ACHN (cell line): ENCODE measurements at regions of chr2 and their contacts with region 1.

Region 1: DNA sequence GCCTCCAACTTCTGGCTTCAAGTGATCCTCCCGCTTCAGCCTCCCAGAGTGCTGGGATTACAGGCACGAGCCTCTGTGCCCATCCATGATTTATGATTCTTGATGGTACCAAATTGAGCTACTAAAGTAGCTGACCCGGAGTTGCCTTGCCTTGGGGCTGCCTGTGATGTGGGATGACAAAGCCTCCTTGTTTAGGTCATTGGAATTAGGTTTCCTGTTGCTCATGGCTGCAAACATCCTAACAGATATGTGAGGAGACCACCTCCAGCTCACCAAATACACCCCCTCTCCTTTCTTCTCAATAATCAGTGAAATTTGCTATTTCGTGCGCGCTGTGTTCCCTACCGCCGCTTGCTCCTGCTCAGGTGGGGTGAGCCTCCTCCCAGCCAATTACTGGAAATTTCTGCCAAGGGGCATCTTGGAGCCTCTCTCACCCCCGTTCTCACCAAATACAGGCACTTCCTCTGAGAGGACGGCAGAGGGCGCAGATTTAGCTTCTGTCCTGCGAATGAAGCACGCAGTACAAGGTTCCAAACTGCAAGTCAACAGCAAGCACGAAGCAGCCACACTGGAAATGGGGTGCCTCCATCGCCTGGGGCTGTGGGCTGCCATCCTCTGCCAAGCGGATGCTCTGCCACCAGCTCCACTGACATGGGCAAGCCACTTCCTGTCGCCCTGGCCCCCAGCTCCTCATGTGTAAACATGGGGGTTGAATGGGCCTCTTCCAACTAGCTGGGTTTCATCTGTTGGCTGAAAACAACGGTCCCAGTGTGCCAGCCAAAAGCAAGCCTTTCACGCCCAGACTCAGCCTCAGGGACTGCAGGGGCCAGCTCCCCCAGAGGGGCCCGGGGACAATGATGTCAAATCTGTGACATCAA is 71.7 kb downstream of the NCAPH start:
- DNase-seq: peak; percentile 74

Region 2: GRCh38 chr2:96514521-96514920 is 107.2 kb after region 1 on chr2:
- in situ Hi-C with region 1: loop called (anchors 10 kb)
- DNase-seq: no peak